Kidney (tissue), 22 donors: ENCODE measurements at regions of chr6 and their contacts with region 1.

Region 1: GRCh38 chr6:20291764-20292580 is 79.7 kb upstream of the MBOAT1 start:
- DNase-seq: peak in 4 of 5 donors; percentile 79 to 92 (median 84)
- H3K4me3 ChIP-seq: no peak overlapping the region
- H3K27ac ChIP-seq: no peak overlapping the region
- H3K4me1 ChIP-seq: no peaks in the 10 kb centered on the region
- H3K27me3 ChIP-seq: no peaks in the 10 kb centered on the region
- CTCF ChIP-seq: peak; percentile 85

Region 2: GRCh38 chr6:20159781-20160540 is 132.0 kb before region 1 on chr6:
- intact Hi-C with region 1: no loop called
- DNase-seq: no peak
- H3K4me3 ChIP-seq: no peak overlapping the region
- H3K27ac ChIP-seq: no peak overlapping the region
- H3K4me1 ChIP-seq: no peaks in the 10 kb centered on the region
- H3K27me3 ChIP-seq: no peaks in the 10 kb centered on the region
- CTCF ChIP-seq: no peak

Region 3: GRCh38 chr6:20455251-20455940 is 163.4 kb after region 1 on chr6:
- intact Hi-C with region 1: no loop called
- DNase-seq: no peak
- H3K4me3 ChIP-seq: no peak overlapping the region
- H3K27ac ChIP-seq: no peak overlapping the region
- H3K4me1 ChIP-seq: peaks cover 0 to 2% (median 0%) of the 10 kb centered on the region in 3 donors
- H3K27me3 ChIP-seq: no peaks in the 10 kb centered on the region
- CTCF ChIP-seq: no peak

Region 4: DNA sequence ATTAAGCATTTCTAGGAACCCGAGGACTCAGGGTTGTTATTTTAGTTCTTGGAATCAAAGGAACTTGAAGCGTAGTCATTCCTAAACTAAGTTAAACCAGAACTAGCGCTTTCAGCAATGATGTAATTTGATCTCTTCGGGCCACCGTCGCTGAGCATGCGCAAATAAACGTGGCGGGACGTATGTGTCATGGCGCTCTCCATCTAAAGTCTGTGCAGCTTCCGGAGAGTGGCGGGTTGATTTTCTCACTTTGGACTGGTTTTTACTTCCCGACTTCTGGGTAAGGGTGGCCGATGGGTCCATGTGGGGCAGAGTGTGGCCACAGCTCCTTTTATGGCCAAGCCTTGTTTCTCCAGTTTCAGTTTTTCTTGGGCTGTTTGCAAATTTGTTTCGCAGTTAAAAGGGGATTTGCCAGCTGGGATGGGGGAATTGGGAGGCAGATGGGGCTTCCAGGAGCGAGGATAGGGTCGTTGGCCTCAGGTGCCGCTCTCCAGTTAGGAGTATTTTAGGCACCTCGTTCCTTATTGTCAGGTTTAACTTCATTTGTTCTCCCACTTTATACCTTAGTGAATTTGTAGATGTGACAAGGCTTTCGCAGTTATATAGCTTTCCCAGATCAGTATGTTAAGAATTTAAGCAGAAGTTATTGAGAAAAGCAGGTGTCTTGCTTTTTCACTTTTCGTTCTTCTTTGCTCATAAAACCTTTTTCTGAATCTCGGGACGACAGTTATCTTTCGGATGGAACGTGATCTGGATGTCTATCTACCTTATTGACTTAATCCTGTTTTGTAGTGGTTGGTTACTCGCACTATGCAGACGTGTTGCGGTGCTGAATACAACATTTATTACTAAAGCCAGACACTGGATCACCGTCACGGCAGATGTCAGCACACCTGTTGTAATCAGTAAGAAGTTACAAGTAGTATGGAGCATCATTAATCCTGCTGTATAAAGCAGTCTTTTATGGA is 242.6 kb after region 1 on chr6 and contains the start of gene CDKAL1:
- intact Hi-C with region 1: loop called (anchors 5 kb)
- DNase-seq: peak; percentile 92 to 97 (median 93)
- H3K4me3 ChIP-seq: peak within 1 kb of the TSS; percentile 86 to 99 (median 93)
- H3K27ac ChIP-seq: peak within 1 kb of the TSS; percentile 69 to 91
- H3K4me1 ChIP-seq: peaks cover 0 to 9% (median 7%) of the 10 kb centered on the region in 3 donors
- H3K27me3 ChIP-seq: no peaks in the 10 kb centered on the region
- CTCF ChIP-seq: no peak
- total RNA-seq, gene CDKAL1: 20.2 TPM